ENCODE measurements at regions of chr3 and their contacts with region 1.

Region 1: DNA sequence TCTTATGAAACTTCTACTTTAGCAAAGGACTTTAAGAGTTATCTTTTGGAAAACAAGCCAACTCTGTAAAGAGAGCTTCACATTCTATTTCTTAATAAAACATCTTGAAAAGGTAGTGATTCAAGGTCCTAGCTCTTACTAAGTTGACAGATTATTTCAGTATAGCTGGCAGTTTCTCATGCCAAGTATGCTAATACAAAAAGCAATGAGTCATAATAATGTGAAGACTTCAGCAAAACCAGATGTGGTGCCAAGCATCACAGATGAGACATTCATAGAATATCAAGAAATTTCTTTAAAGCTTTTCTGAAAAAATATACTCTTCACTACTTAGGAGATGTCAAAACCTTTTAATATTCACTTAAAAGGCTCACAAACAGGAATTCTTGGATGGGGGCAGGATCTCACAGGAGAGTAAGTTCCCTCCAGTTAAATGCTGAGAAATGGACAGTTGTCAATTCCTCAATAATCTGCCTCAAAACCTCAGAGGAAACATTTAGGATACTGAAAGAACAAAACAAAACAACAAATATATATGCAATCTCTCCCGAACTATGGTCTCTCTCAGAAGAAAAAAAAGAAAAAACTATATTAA is 45.6 kb downstream of the DCBLD2 start:
- DNase-seq: peak; percentile 90
- H3K4me3 Mint-ChIP-seq: no peak overlapping the region
- H3K27ac Mint-ChIP-seq: peak overlapping the region; percentile 61
- H3K4me1 Mint-ChIP-seq: peaks cover 11% of the 10 kb centered on the region
- H3K27me3 Mint-ChIP-seq: no peaks in the 10 kb centered on the region
- CTCF ChIP-seq: no peak

Region 2: GRCh38 chr3:98563661-98564281 is 292.1 kb before region 1 on chr3:
- CTCF ChIA-PET with region 1: no interaction called
- POLR2A ChIA-PET with region 1: no interaction called
- intact Hi-C with region 1: no loop called
- DNase-seq: peak; percentile 56
- H3K4me3 Mint-ChIP-seq: no peak overlapping the region
- H3K27ac Mint-ChIP-seq: peak overlapping the region; percentile 42
- H3K4me1 Mint-ChIP-seq: peaks cover 10% of the 10 kb centered on the region
- H3K27me3 Mint-ChIP-seq: no peaks in the 10 kb centered on the region
- CTCF ChIP-seq: no peak

Region 3: DNA sequence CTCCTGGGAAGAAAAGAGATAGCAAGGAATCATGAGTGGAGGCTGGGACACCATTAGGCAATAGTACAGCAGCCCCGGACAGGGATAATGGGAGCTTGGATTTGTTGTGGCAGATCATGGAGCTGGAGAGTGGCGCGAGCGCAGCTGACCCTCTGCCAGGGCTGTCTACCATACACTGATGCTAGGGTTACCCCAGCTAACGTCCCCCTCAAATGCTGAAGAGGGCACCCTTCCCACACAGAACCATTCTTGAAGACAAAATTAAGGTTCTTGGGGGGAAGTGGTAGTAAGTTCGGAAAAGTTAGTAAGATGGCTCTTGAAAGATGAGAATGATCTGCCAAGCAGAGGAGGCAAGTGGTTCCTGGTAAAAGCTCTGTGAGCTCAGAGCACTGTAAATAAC is 31.6 kb before region 1 on chr3:
- CTCF ChIA-PET with region 1: interaction called, 10 read pairs
- POLR2A ChIA-PET with region 1: interaction called, 4 read pairs
- intact Hi-C with region 1: no loop called
- DNase-seq: no peak
- H3K4me3 Mint-ChIP-seq: no peak overlapping the region
- H3K27ac Mint-ChIP-seq: no peak overlapping the region
- H3K4me1 Mint-ChIP-seq: no peaks in the 10 kb centered on the region
- H3K27me3 Mint-ChIP-seq: no peaks in the 10 kb centered on the region
- CTCF ChIP-seq: no peak

Region 4: GRCh38 chr3:99319961-99320360 is 464.1 kb after region 1 on chr3:
- CTCF ChIA-PET with region 1: no interaction called
- POLR2A ChIA-PET with region 1: no interaction called
- intact Hi-C with region 1: no loop called
- DNase-seq: peak; percentile 37
- H3K4me3 Mint-ChIP-seq: no peak overlapping the region
- H3K27ac Mint-ChIP-seq: peak overlapping the region; percentile 69
- H3K4me1 Mint-ChIP-seq: peaks cover 40% of the 10 kb centered on the region
- H3K27me3 Mint-ChIP-seq: no peaks in the 10 kb centered on the region
- CTCF ChIP-seq: no peak

Measured in MCF 10A (cell line).